Activated CD8-positive, alpha-beta T cell treated with anti-CD3 and anti-CD28 coated beads for 36 hours (primary cell): ENCODE measurements at regions of chr17 and their contacts with region 1.

Region 1: GRCh38 chr17:6913608-6914443 is 82.0 kb upstream of the ALOX12 start:
- DNase-seq: peak; percentile 91
- ATAC-seq: peak; percentile 94
- H3K4me3 Mint-ChIP-seq: peak overlapping the region; percentile 71
- H3K27ac Mint-ChIP-seq: no peak overlapping the region
- H3K4me1 Mint-ChIP-seq: peaks cover 6% of the 10 kb centered on the region
- H3K27me3 Mint-ChIP-seq: peaks cover 4% of the 10 kb centered on the region
- CTCF ChIP-seq: peak; percentile 95

Region 2: GRCh38 chr17:6843241-6843880 is 70.5 kb before region 1 on chr17:
- CTCF ChIA-PET with region 1: interaction called, 23 read pairs
- POLR2A ChIA-PET with region 1: no interaction called
- intact Hi-C with region 1: no loop called
- DNase-seq: no peak
- ATAC-seq: no peak
- H3K4me3 Mint-ChIP-seq: no peak overlapping the region
- H3K27ac Mint-ChIP-seq: no peak overlapping the region
- H3K4me1 Mint-ChIP-seq: no peaks in the 10 kb centered on the region
- H3K27me3 Mint-ChIP-seq: peaks cover 37% of the 10 kb centered on the region
- CTCF ChIP-seq: peak; percentile 59

Region 3: GRCh38 chr17:6894206-6894528 is 19.7 kb before region 1 on chr17:
- CTCF ChIA-PET with region 1: interaction called, 20 read pairs
- POLR2A ChIA-PET with region 1: interaction called, 3 read pairs
- intact Hi-C with region 1: no loop called
- DNase-seq: peak; percentile 48
- ATAC-seq: peak; percentile 71
- H3K4me3 Mint-ChIP-seq: no peak overlapping the region
- H3K27ac Mint-ChIP-seq: no peak overlapping the region
- H3K4me1 Mint-ChIP-seq: no peaks in the 10 kb centered on the region
- H3K27me3 Mint-ChIP-seq: peaks cover 29% of the 10 kb centered on the region
- CTCF ChIP-seq: peak; percentile 67

Region 4: DNA sequence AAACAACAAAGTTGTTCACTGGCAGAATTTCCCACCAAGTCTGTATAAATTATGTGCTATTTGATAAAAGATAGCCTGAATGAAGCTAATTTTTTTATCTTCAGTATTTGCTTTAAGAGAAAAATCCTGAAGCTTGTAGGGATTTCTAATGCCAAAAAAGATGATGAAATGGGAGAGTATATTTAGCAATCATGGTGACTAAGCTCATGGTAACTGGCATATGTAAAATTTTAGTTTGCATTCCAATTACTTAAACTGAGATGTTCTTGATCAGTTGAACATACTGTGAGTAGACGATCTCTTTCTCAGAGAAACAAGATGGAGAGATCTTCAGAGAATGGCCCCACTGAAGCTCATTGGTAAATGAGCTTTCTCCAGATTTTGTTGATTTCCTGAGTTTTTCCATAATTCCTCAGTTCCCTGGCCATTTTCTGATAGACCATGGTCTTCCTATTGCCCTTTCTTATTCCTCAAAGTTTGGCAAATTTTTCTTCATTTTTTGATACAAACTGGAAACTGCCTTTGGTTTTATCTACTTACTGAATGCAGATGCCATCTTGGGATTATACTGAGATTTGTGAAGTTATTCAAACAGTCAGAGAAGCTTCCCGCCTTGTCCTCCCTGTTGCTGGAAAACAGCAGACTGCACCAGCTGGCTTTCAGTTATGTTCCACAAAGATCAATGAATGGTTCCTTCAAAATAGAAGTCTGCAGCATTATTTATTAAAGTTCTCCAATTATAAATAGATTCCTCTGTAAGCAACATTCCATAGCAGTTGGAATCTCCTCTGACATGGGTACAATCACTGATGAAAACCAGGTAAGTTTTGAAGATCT is 13.7 kb after region 1 on chr17:
- CTCF ChIA-PET with region 1: interaction called, 34 read pairs
- POLR2A ChIA-PET with region 1: interaction called, 4 read pairs
- intact Hi-C with region 1: no loop called
- DNase-seq: no peak
- ATAC-seq: no peak
- H3K4me3 Mint-ChIP-seq: no peak overlapping the region
- H3K27ac Mint-ChIP-seq: no peak overlapping the region
- H3K4me1 Mint-ChIP-seq: peaks cover 11% of the 10 kb centered on the region
- H3K27me3 Mint-ChIP-seq: peaks cover 1% of the 10 kb centered on the region
- CTCF ChIP-seq: no peak

Region 5: GRCh38 chr17:6994666-6995246 is 80.9 kb after region 1 on chr17:
- CTCF ChIA-PET with region 1: interaction called, 284 read pairs
- POLR2A ChIA-PET with region 1: interaction called, 3 read pairs
- intact Hi-C with region 1: no loop called
- DNase-seq: no peak
- ATAC-seq: no peak
- H3K4me3 Mint-ChIP-seq: no peak overlapping the region
- H3K27ac Mint-ChIP-seq: no peak overlapping the region
- H3K4me1 Mint-ChIP-seq: peaks cover 3% of the 10 kb centered on the region
- H3K27me3 Mint-ChIP-seq: no peaks in the 10 kb centered on the region
- CTCF ChIP-seq: no peak

Region 6: DNA sequence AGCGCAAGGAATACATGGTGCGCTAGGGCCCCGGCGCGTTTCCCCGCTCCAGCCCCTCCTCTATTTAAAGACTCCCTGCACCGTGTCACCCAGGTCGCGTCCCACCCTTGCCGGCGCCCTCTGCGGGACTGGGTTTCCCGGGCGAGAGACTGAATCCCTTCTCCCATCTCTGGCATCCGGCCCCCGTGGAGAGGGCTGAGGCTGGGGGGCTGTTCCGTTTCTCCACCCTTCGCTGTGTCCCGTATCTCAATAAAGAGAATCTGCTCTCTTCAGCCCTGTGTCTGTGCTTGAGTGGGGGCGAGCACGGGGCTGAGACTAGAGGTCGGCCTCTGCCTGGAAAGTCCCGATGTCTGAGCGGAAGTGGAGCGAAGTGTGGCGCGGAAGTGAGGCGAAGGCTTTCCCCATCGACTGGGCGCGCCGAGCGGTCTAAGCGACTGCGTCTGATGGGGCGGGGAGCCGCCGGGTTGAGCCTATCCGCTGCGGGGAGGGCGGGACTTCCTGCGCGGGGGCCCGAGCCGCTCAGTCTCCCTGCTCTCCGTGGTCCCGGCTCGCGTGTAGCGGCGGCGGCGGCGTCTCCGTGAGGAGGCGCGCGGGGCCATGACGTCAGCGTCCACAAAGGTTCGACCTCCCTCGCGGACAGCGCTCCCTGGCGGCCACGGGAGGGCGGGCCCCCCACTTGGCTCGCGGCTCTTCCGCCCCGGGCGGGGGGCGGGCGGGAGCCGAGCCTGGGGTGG is 100.6 kb after region 1 on chr17:
- CTCF ChIA-PET with region 1: interaction called, 284 read pairs
- POLR2A ChIA-PET with region 1: interaction called, 5 read pairs
- intact Hi-C with region 1: no loop called
- DNase-seq: peak; percentile 98
- ATAC-seq: peak; percentile 86
- H3K4me3 Mint-ChIP-seq: peak overlapping the region; percentile 83
- H3K27ac Mint-ChIP-seq: peak overlapping the region; percentile 98
- H3K4me1 Mint-ChIP-seq: peaks cover 52% of the 10 kb centered on the region
- H3K27me3 Mint-ChIP-seq: no peaks in the 10 kb centered on the region
- CTCF ChIP-seq: peak; percentile 77

Region 7: GRCh38 chr17:7064261-7064660 is 150.4 kb after region 1 on chr17:
- CTCF ChIA-PET with region 1: no interaction called
- POLR2A ChIA-PET with region 1: no interaction called
- intact Hi-C with region 1: no loop called
- DNase-seq: no peak
- ATAC-seq: no peak
- H3K4me3 Mint-ChIP-seq: no peak overlapping the region
- H3K27ac Mint-ChIP-seq: no peak overlapping the region
- H3K4me1 Mint-ChIP-seq: peaks cover 12% of the 10 kb centered on the region
- H3K27me3 Mint-ChIP-seq: peaks cover 10% of the 10 kb centered on the region
- CTCF ChIP-seq: no peak

Region 8: GRCh38 chr17:7306911-7307686 is 393.3 kb after region 1 on chr17 and contains the start of gene EIF5A:
- CTCF ChIA-PET with region 1: no interaction called
- POLR2A ChIA-PET with region 1: no interaction called
- intact Hi-C with region 1: no loop called
- DNase-seq: peak; percentile 100
- ATAC-seq: peak; percentile 84
- H3K4me3 Mint-ChIP-seq: peak within 1 kb of the TSS; percentile 94
- H3K27ac Mint-ChIP-seq: peak within 1 kb of the TSS; percentile 98
- H3K4me1 Mint-ChIP-seq: peaks cover 38% of the 10 kb centered on the region
- H3K27me3 Mint-ChIP-seq: no peaks in the 10 kb centered on the region
- CTCF ChIP-seq: no peak
- total RNA-seq, gene EIF5A: 1,064 TPM